ENCODE measurements at regions of chr6 and their contacts with region 1.

Region 1: DNA sequence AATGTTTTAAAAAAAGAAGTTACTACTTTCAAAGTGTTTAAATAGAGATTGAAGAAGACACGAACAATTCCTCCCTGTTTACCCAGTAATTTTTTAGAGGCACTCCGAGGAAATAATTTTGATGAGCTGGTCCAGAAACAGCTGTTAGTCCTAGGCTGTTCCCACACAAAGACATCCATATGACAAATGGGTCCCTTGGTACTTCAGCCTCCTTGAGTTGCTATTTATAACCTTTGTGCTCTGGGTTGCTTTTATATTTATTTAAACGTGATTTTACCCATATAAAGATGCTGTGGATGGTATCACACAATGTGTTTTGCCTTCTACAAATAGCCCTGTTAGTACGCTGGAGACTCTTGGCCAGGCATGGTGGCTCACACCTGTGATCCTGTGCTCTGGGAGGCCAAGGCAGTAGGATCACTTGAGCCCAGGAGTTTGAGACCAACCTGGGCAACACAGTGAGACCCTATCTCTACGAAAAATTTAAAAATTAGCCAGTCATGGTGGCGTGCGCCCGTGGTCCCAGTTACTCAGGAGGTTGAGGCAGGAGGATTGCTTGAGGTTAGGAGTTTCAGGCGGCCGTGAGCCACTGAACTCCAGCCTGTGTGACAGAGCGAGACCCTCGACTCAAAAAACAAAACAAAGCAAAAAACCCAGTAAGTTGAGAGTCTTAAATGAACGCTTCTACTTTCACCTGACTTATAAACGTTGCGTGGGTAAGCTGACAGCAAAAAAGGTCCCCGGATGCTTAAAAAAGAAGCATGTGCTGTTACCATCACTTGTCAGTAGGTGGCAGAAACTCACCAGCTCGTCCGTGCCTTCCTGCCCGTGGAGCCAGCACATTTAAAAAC is 56.9 kb upstream of the ARMH2 start:
- ATAC-seq: peak; percentile 56 to 94 (median 83)
- H3K4me3 ChIP-seq: no peak overlapping the region
- H3K27ac ChIP-seq: peak overlapping the region in 1 of 2 donors; percentile 43
- H3K4me1 ChIP-seq: peaks cover 5 to 13% of the 10 kb centered on the region in 2 donors

Region 2: GRCh38 chr6:24394780-24395437 is 460.7 kb before region 1 on chr6:
- in situ Hi-C with region 1: no loop called
- ATAC-seq: peak in 2 of 8 experiments; percentile 99
- H3K4me3 ChIP-seq: no peak overlapping the region
- H3K27ac ChIP-seq: no peak overlapping the region
- H3K4me1 ChIP-seq: no peaks in the 10 kb centered on the region

Region 3: DNA sequence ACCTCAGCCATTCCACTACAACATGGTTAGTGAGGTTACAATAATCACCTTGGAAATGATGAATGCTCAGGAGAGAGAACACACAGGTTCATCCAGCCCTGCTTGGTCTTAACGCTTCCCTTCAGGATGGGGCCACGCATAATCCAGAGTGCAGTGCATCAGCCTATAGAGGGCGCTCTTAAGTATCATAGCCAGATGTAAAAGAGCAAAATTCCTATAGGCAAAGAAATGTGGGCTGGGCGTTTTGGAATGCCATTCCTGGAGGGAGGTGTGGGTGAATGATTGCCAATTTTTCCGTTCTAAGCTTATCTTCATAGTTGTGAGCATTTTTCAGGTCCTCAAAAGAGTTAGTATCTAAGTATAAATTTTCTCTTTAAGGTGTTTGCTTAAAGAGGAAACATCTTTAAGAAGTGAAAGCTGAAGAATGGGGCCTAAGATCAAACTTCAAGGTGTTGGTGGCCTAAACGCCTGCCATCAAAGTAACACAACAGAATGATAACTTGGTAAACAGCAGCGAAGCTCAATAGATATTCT is 78.3 kb after region 1 on chr6:
- in situ Hi-C with region 1: no loop called
- ATAC-seq: peak in 2 of 8 experiments; percentile 22 to 25
- H3K4me3 ChIP-seq: no peak overlapping the region
- H3K27ac ChIP-seq: no peak overlapping the region
- H3K4me1 ChIP-seq: peaks cover 28 to 29% of the 10 kb centered on the region in 2 donors

Region 4: GRCh38 chr6:25017932-25018567 is 162.4 kb after region 1 on chr6:
- in situ Hi-C with region 1: loop called in 2 of 9 experiments (anchors 25 kb)
- ATAC-seq: peak in 6 of 8 experiments; percentile 50 to 84 (median 68)
- H3K4me3 ChIP-seq: no peak overlapping the region
- H3K27ac ChIP-seq: no peak overlapping the region
- H3K4me1 ChIP-seq: peaks cover 13 to 16% of the 10 kb centered on the region in 2 donors

Region 5: DNA sequence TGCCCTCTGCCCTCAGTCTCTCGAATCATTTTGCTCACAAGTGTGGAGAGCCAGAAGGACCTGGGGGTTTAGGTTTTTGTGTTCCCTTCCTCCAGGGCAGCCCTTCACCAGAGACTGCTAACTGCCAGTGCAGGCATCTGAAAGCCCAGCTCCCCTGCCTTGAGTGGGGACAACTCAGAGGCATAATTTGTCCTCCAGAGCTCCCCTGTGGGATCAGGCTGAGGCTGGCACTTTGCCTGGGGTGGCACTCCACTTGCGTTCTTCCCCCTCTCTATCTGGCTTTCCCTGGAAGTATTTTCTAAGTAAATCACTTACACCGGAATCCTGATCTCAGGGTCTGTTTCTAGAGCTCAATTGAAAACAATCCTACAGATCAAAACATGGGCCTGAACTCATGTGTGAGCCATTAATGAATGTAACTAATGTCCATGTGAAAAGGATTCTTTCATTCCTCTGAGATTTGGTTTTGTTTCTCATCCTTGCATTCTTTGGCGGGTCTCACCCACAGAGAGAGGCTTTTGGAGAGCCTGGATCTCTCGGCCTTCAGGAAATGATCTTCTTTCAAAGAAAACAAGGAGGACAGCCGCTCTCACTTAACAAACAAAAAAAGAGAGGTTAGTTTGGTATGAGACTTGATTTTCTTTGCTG is 205.8 kb after region 1 on chr6:
- in situ Hi-C with region 1: loop called in 4 of 9 experiments (anchors 10 to 25 kb)
- ATAC-seq: no peak
- H3K4me3 ChIP-seq: no peak overlapping the region
- H3K27ac ChIP-seq: no peak overlapping the region
- H3K4me1 ChIP-seq: no peaks in the 10 kb centered on the region

Region 6: DNA sequence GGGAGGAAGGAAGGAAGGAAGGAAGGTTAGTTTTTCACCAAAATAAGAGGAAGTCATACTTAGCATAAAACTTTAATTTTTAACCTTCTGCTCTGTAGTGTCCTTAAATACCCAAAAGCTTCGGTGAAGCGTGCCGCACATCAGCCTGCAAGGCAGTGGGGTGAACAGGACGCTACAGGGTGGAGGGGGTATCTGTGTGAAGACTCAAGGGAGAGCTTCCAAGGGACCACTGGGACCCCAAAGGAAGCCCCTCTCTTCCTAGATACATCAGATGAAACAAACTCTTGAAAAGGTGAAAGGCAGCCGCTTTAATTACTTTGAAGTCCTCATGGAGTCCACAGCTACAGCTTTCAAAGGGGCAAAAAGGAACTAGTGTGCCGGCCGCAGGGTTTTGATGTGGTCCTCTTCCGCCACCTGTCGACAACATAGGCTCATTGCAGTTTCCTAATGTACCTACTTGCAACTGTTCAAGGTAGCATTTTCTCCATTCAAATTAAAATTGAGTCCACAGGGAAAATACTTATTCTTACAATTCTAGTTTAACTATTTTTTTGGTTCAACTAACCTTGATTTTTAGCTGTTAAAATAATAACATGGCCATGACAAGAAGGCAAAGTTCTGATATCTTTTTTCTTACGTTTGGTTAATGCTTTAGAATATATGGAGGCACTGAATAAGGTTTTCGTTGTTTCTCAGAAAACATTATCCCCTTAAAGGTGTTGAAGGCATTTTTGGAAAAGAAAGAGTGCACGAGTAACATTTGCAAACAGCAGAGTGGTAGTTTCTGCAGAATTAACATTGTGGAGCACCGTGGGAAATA is 215.1 kb after region 1 on chr6:
- in situ Hi-C with region 1: loop called in 5 of 9 experiments (anchors 10 to 25 kb)
- ATAC-seq: peak; percentile 69 to 95 (median 78)
- H3K4me3 ChIP-seq: no peak overlapping the region
- H3K27ac ChIP-seq: no peak overlapping the region
- H3K4me1 ChIP-seq: no peaks in the 10 kb centered on the region

Region 7: DNA sequence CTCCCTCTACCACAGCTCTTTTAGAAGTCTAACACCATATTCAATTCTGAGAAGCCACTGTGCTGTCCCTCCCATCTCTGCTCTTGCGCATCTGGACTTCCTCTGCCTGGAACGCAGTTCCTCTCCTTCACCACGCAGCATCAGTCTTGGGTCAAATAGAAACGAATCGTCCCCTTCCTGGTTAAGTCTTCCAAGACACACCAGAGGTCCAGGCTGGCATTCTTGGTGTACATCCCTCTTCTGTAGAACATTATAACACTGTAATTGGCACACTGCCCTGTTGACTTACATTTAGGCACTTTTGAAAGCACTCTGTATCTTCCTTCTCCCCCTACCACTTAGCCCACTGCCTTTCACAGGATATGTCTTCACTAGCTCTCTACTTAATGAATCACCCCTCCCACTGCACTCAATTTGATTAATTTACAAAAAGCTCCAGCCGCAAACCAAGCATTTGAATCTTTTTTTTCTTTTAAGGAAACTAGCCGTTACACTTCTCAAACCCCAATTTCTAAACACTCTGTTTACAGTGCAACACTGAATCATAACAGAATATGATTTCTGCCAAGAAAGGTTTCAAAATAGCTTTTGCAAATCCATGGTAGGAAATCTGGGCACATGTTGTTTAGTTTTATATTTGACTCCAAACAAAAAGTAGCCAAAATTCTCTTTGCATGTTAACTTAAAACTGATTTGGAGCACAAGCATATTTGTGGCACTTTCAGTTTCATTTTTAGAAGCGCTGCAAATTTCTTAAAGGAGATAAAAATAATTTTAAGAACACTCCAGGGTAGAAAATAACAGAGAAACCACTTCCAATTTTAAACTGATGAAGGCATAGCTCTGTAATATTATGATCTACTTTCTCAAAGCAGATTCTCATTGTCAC is 282.9 kb after region 1 on chr6:
- in situ Hi-C with region 1: no loop called
- ATAC-seq: peak in 5 of 8 experiments; percentile 50 to 98 (median 90)
- H3K4me3 ChIP-seq: no peak overlapping the region
- H3K27ac ChIP-seq: no peak overlapping the region
- H3K4me1 ChIP-seq: no peaks in the 10 kb centered on the region